Naive thymus-derived CD4-positive, alpha-beta T cell (primary cell): ENCODE measurements at regions of chr3 and their contacts with region 1.

Region 1: DNA sequence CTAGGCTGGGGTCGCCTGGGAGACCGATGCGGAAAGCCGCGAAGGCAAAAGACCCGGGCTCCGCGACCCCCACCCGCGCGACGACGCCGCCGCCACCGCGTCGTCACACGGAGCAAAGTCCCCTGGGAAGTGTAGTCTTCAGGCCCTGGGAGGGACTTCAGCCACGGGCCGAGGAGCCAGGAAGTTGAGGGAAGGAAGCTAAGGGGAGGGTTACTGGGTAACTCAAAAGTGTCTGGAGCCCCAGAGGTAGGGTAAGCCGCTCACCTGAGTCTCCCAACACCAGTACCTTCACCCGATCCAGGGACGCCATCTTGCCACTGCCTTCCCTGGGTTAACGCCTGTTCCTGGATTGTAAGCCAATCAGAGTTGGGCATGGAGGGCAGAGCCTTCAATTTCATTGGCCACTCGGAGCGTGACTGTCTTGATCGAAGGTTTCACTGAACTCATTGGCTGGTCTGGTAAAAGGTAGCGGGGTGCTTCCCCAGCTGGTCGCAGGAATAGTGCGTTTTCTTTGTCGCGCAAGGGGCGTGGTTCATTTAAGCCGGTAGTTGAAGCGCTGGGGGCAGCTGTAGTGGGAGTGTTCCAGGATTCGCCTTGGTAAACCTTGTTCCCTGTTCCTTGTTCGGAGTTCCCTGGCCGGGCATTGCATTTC is at the starts of genes GTF2E1 and RABL3:
- DNase-seq: peak; percentile 86 to 98 (median 97)
- ATAC-seq: peak; percentile 97
- H3K4me3 ChIP-seq: peak within 1 kb of the TSS; percentile 81
- H3K4me3 Mint-ChIP-seq: peak within 1 kb of the TSS; percentile 84 to 97 (median 92)
- H3K27ac ChIP-seq: peak within 1 kb of the TSS; percentile 98
- H3K27ac Mint-ChIP-seq: peak within 1 kb of the TSS; percentile 93 to 99 (median 97)
- H3K4me1 ChIP-seq: peaks cover 16 to 23% of the 10 kb centered on the region in 2 donors
- H3K4me1 Mint-ChIP-seq: peaks cover 26 to 55% (median 47%) of the 10 kb centered on the region in 7 donors
- H3K27me3 ChIP-seq: no peaks in the 10 kb centered on the region
- H3K27me3 Mint-ChIP-seq: no peaks in the 10 kb centered on the region
- total RNA-seq, gene GTF2E1: 8.4 to 27.3 (median 25.3) TPM
- total RNA-seq, gene RABL3: 15.4 to 30.3 (median 23.0) TPM

Region 2: DNA sequence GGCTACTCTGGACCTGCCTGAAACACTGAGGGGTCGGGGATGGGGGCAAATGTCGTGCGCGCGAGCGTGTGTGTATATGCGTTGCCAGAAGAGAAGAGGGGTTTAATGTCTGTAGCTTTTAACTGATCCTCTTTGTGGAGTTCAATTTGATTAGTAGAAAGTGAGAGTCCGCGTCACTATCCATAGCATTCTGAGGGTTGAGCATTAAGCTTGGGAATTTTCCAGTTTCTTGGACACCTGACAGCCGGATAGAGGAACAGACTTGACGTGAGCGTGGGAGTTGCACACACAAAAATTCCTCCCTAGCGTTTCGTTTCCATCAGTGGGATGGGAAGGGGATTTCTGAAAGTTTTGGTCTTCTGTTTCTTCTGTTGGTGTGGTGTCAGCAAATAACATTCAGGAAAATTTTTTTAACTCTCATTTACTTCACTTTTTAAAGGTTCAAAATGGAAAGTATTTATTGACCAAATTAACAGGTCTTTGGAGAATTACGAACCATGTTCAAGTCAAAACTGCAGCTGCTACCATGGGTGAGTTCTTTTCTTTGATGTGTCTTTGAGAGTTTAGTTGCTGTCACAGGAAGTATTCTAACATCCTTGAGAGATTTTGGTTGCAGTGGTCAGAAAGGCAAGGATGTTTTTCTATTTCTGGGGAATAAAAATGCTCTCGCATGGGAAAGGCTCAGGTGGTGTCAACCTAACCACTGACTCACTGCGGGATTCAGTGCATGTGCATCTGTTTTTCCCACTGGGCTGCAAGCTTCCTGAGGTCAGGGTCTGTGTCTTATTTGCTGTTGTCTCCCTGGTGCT is 1272.7 kb before region 1 on chr3:
- CTCF ChIA-PET with region 1: no interaction called
- POLR2A ChIA-PET with region 1: no interaction called
- intact Hi-C with region 1: loop called in 1 of 2 experiments (anchors 2 kb)
- DNase-seq: peak in 7 of 9 donors; percentile 10 to 32 (median 24)
- ATAC-seq: peak; percentile 48
- H3K4me3 ChIP-seq: peak overlapping the region; percentile 86
- H3K4me3 Mint-ChIP-seq: peak overlapping the region; percentile 90 to 97 (median 94)
- H3K27ac ChIP-seq: peak overlapping the region; percentile 88
- H3K27ac Mint-ChIP-seq: peak overlapping the region; percentile 83 to 95 (median 89)
- H3K4me1 ChIP-seq: peaks cover 12% of the 10 kb centered on the region in 2 donors
- H3K4me1 Mint-ChIP-seq: peaks cover 27 to 35% (median 30%) of the 10 kb centered on the region in 7 donors
- H3K27me3 ChIP-seq: no peaks in the 10 kb centered on the region
- H3K27me3 Mint-ChIP-seq: no peaks in the 10 kb centered on the region

Region 3: GRCh38 chr3:120417272-120417911 is 324.9 kb before region 1 on chr3:
- CTCF ChIA-PET with region 1: no interaction called
- POLR2A ChIA-PET with region 1: no interaction called
- intact Hi-C with region 1: loop called in 1 of 2 experiments (anchors 1 kb)
- DNase-seq: peak; percentile 58 to 83 (median 79)
- ATAC-seq: peak; percentile 100
- H3K4me3 ChIP-seq: peak overlapping the region; percentile 72
- H3K4me3 Mint-ChIP-seq: peak overlapping the region; percentile 80 to 89 (median 88)
- H3K27ac ChIP-seq: no peak overlapping the region
- H3K27ac Mint-ChIP-seq: peak overlapping the region in 8 of 9 donors; percentile 13 to 76 (median 32)
- H3K4me1 ChIP-seq: no peaks in the 10 kb centered on the region
- H3K4me1 Mint-ChIP-seq: peaks cover 16 to 24% (median 18%) of the 10 kb centered on the region in 7 donors
- H3K27me3 ChIP-seq: no peaks in the 10 kb centered on the region
- H3K27me3 Mint-ChIP-seq: peaks cover 0 to 7% (median 6%) of the 10 kb centered on the region in 5 donors

Region 4: DNA sequence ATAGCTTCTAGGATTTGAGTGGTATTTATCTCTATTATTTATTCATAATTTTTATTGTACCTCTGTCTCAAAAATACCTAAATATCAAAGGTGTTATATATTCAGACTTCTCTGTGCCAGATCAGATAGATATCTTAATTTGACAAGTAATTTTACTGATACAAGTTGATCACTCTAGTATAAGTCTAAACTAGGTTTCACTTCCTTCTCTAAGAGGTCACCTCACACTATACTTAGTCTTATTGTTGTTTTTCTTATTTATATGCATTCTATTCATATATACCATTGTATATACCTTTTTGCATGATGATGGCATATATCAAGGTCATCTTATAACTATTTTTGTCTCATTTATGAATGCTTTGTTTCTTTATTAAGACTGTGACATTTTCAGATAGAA is 33.9 kb before region 1 on chr3:
- CTCF ChIA-PET with region 1: no interaction called
- POLR2A ChIA-PET with region 1: no interaction called
- intact Hi-C with region 1: loop called in 1 of 2 experiments (anchors 5 kb)
- DNase-seq: no peak
- ATAC-seq: no peak
- H3K4me3 ChIP-seq: no peak overlapping the region
- H3K4me3 Mint-ChIP-seq: no peak overlapping the region
- H3K27ac ChIP-seq: no peak overlapping the region
- H3K27ac Mint-ChIP-seq: peak overlapping the region in 2 of 9 donors; percentile 13 to 62
- H3K4me1 ChIP-seq: no peaks in the 10 kb centered on the region
- H3K4me1 Mint-ChIP-seq: peaks cover 0 to 21% (median 10%) of the 10 kb centered on the region in 7 donors
- H3K27me3 ChIP-seq: no peaks in the 10 kb centered on the region
- H3K27me3 Mint-ChIP-seq: no peaks in the 10 kb centered on the region

Region 5: GRCh38 chr3:120795017-120795648 is 52.8 kb after region 1 on chr3:
- CTCF ChIA-PET with region 1: no interaction called
- POLR2A ChIA-PET with region 1: no interaction called
- intact Hi-C with region 1: loop called (anchors 2 kb)
- DNase-seq: peak; percentile 62 to 83 (median 79)
- ATAC-seq: peak; percentile 96
- H3K4me3 ChIP-seq: no peak overlapping the region
- H3K4me3 Mint-ChIP-seq: no peak overlapping the region
- H3K27ac ChIP-seq: no peak overlapping the region
- H3K27ac Mint-ChIP-seq: no peak overlapping the region
- H3K4me1 ChIP-seq: peaks cover 0 to 4% of the 10 kb centered on the region in 2 donors
- H3K4me1 Mint-ChIP-seq: peaks cover 0 to 20% (median 17%) of the 10 kb centered on the region in 7 donors
- H3K27me3 ChIP-seq: no peaks in the 10 kb centered on the region
- H3K27me3 Mint-ChIP-seq: no peaks in the 10 kb centered on the region

Region 6: GRCh38 chr3:121834696-121835464 is 1092.6 kb after region 1 on chr3 and contains the starts of genes EAF2 and IQCB1:
- CTCF ChIA-PET with region 1: no interaction called
- POLR2A ChIA-PET with region 1: no interaction called
- intact Hi-C with region 1: loop called in 1 of 2 experiments (anchors 10 kb)
- DNase-seq: peak; percentile 93 to 98 (median 97)
- ATAC-seq: peak; percentile 99
- H3K4me3 ChIP-seq: peak within 1 kb of the TSS; percentile 85
- H3K4me3 Mint-ChIP-seq: peak within 1 kb of the TSS; percentile 83 to 97 (median 93)
- H3K27ac ChIP-seq: peak within 1 kb of the TSS; percentile 89
- H3K27ac Mint-ChIP-seq: peak within 1 kb of the TSS; percentile 78 to 98 (median 92)
- H3K4me1 ChIP-seq: peaks cover 10 to 14% of the 10 kb centered on the region in 2 donors
- H3K4me1 Mint-ChIP-seq: peaks cover 32 to 65% (median 58%) of the 10 kb centered on the region in 7 donors
- H3K27me3 ChIP-seq: no peaks in the 10 kb centered on the region
- H3K27me3 Mint-ChIP-seq: no peaks in the 10 kb centered on the region
- total RNA-seq, gene EAF2: 6.4 to 16.1 (median 7.5) TPM
- total RNA-seq, gene IQCB1: 32.6 to 45.6 (median 35.8) TPM